ENCODE measurements at regions of chr15 and their contacts with region 1.

Region 1: DNA sequence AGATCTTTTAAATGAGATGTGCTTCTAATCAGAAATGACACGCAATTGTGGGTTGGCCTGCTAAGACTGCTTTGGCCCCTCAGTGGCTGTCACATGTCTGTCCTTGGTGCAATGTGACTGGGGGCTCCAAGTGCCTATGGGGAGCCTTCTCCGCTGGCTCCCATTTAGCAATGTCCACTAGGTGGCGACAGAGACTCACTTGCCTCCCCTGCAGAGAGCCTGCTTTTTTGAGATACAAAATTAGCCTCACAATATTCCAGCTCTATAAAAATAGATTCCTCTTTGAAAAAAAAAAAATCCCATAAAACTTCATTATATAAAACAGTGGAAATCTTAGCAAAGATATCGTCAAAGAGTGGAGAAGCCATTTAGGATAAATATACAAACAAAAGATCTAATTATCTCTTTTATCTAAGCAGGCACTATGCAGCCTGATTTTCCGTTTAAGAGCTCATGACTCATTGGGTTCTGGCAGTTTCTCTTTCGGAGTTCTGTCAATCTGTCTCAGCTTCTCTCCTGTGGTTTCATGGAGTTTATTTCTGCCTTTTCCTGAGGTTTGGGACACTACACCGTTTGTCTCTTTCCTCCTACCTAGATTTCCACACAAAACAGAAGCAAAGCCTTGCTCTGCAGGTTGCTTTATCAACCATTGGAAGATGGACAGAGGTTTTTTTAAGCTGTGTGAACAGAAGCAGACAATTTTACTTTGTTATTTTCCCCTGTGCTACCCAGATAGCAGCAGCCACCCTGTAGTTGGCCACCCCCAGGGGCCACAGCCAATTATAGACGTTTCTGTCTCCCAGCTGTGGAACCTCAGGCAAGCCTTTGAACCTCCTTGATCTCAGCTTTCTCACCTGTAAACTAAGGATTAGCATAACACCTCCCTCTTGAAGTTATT is 68.4 kb upstream of the TNFAIP8L3 start:
- DNase-seq: peak; percentile 72 to 87 (median 86)
- H3K4me3 ChIP-seq: peak overlapping the region in 3 of 7 experiments; percentile 22 to 51 (median 28)
- H3K27ac ChIP-seq: no peak overlapping the region
- H3K4me1 ChIP-seq: peaks cover 0 to 5% (median 4%) of the 10 kb centered on the region in 4 experiments
- H3K27me3 ChIP-seq: peaks cover 0 to 6% (median 0%) of the 10 kb centered on the region in 5 experiments

Region 2: DNA sequence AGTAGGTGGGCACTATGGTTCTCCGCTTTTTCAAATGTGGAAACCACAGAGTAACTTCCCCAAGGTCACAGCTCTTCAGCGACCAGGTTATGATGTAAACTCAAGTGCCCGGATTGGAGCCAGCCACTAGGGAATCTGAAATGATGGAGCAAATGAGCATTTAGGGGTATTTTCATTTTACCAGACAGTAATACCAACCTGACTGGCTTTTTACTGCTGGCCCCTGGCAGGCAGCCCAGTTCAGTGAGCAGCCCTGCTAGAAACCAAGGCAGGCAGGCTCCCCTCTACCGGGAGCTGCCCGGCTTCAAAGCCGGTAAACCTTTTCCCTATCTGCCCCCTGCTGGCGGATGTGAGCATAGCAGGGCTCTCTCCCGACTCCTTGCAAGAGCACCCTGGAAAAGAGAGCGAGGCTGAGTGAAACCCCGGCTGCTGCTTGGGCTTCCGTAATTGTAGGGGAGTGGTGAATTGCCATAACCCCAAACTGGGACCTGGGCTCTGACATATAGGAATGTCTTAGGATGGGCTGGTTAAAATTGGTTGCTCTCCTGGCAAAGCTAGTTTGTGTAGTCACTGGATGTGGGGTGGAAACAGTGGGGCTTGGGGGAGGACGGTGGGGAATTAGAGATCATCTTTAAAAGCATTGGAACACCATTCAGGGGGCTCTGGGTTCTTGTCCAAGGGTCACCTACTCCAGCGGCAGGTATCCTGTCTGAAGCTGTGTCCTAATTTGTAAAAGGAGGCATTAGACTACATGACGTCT is 29.6 kb after region 1 on chr15:
- CTCF ChIA-PET with region 1: interaction called, 38 read pairs
- POLR2A ChIA-PET with region 1: no interaction called
- DNase-seq: peak; percentile 72 to 78 (median 73)
- H3K4me3 ChIP-seq: no peak overlapping the region
- H3K27ac ChIP-seq: no peak overlapping the region
- H3K4me1 ChIP-seq: peaks cover 0 to 4% (median 0%) of the 10 kb centered on the region in 4 experiments
- H3K27me3 ChIP-seq: peaks cover 0 to 36% (median 17%) of the 10 kb centered on the region in 5 experiments

Region 3: GRCh38 chr15:51335538-51336321 is 172.6 kb after region 1 on chr15:
- CTCF ChIA-PET with region 1: no interaction called
- POLR2A ChIA-PET with region 1: no interaction called
- DNase-seq: peak in 1 of 3 donors; percentile 14
- H3K4me3 ChIP-seq: no peak overlapping the region
- H3K27ac ChIP-seq: no peak overlapping the region
- H3K4me1 ChIP-seq: no peaks in the 10 kb centered on the region
- H3K27me3 ChIP-seq: peaks cover 0 to 10% (median 6%) of the 10 kb centered on the region in 5 experiments

Region 4: DNA sequence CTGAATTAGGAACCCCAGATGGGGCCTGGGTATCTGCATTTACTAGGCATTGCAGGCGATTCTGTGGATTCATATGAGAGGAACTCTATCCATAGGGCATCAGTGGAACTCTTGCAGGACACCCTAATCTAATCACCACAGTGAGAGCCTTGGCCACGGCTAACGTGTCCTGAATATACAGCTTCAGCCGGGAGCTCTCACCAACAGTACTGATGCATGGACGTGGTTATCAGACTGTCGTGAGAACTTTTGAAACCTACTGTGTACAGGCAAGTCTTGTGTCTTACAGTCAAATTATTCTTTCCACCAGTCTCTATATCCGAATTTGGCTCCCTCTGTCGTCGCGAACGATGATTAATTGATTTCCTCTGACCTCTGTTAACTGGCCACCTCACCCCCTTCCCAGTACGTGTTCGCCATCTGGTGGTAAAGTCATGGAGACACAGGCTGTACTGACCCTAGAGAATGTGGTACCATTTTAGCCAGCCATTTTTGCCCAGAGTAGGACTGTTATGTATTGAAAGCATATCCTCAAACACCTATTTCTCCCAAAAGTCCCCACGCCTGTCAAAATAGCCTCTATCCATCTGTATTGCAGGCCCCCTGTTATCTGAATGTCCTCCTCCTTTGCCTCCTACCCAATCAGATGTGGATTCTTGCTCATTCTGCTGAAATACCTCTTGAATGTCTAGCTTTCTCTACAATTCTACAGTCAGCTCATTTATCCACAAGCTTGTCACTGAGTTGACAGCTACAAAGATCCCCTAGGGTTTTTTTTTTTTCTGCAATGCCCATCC is 218.1 kb after region 1 on chr15:
- CTCF ChIA-PET with region 1: interaction called, 19 read pairs
- POLR2A ChIA-PET with region 1: no interaction called
- DNase-seq: peak; percentile 52 to 55 (median 54)
- H3K4me3 ChIP-seq: no peak overlapping the region
- H3K27ac ChIP-seq: no peak overlapping the region
- H3K4me1 ChIP-seq: no peaks in the 10 kb centered on the region
- H3K27me3 ChIP-seq: peaks cover 0 to 2% (median 0%) of the 10 kb centered on the region in 5 experiments

Measured in common myeloid progenitor, CD34-positive (primary cell).